A549 (cell line): ENCODE measurements at regions of chr1 and their contacts with region 1.

Region 1: GRCh38 chr1:47437447-47438164 is at the start of gene FOXD2:
- DNase-seq: peak; percentile 77 to 84
- ATAC-seq: peak; percentile 88 to 90
- H3K4me3 ChIP-seq: peak within 1 kb of the TSS; percentile 96
- H3K27ac ChIP-seq: peak within 1 kb of the TSS; percentile 95 to 99
- H3K4me1 ChIP-seq: peaks cover 7% of the 10 kb centered on the region; the same call in 1 of the 3 replicates
- CTCF ChIP-seq: peak; percentile 94
- EP300 ChIP-seq: no peak
- POLR2A ChIP-seq: peak; percentile 58
- RAD21 ChIP-seq: peak; percentile 26 to 83; a peak in 4 of 5 replicates
- polyA plus RNA-seq, gene FOXD2: 0.12 and 0.13 TPM in 2 replicates

Region 2: DNA sequence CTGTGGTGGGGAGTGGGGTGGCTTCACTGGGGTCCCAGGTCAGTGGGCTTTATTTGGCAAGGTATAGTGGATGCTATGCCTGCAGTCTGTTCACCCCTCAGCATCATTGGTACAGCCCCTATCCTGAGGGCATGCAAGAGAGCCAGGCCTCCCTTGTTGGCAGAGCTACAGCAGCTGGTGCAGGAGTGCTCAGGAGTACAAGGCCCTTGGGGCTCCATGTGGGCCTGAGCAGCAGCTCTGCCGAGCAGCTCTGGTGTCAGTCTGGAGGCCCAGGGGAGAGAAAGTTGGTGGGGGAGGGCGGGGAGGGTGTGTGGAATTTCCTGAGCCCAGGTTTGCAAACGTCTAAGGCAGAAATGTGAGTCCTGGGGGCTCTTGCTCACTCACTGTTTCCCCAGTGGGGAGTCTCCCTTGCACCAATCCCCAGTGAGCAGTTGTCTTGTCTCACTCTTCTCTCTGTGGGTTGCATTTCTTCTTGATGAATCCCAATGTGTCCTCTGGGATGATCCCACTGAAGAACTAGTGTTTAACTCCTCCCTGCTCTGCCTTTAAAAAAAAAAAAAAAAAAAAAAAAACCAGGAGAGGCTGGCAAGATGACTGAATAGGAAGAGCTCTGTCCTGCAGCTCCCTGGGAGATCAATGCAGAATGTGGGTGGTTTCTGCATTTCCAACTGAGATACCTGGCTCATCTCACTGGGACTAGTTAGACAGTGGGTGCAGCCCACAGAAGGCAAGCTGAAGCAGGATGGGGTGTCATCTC is 453.6 kb before region 1 on chr1:
- CTCF ChIA-PET with region 1: no interaction called
- POLR2A ChIA-PET with region 1: no interaction called
- DNase-seq: no peak
- ATAC-seq: no peak
- H3K4me3 ChIP-seq: no peak overlapping the region
- H3K27ac ChIP-seq: no peak overlapping the region
- H3K4me1 ChIP-seq: no peaks in the 10 kb centered on the region
- CTCF ChIP-seq: no peak
- EP300 ChIP-seq: no peak
- POLR2A ChIP-seq: no peak
- RAD21 ChIP-seq: no peak

Region 3: GRCh38 chr1:47179017-47179987 is 258.3 kb before region 1 on chr1:
- CTCF ChIA-PET with region 1: interaction called, 10 read pairs
- POLR2A ChIA-PET with region 1: interaction called, 3 read pairs
- DNase-seq: peak; percentile 73 to 92
- ATAC-seq: peak; percentile 70 to 84
- H3K4me3 ChIP-seq: peak overlapping the region; percentile 46
- H3K27ac ChIP-seq: peak overlapping the region; percentile 81 to 90
- H3K4me1 ChIP-seq: peaks cover 36% of the 10 kb centered on the region
- CTCF ChIP-seq: peak; percentile 78
- EP300 ChIP-seq: no peak
- POLR2A ChIP-seq: no peak; the same call in 1 of the 2 replicates
- RAD21 ChIP-seq: peak; percentile 88 to 89

Region 4: GRCh38 chr1:47424336-47424982 is 13.1 kb before region 1 on chr1:
- CTCF ChIA-PET with region 1: interaction called, 28 read pairs
- POLR2A ChIA-PET with region 1: no interaction called
- DNase-seq: peak; percentile 63 to 65
- ATAC-seq: peak; percentile 92 to 97
- H3K4me3 ChIP-seq: no peak overlapping the region
- H3K27ac ChIP-seq: no peak overlapping the region
- H3K4me1 ChIP-seq: no peaks in the 10 kb centered on the region
- CTCF ChIP-seq: peak; percentile 65
- EP300 ChIP-seq: no peak
- POLR2A ChIP-seq: no peak
- RAD21 ChIP-seq: peak; percentile 22 to 38; a peak in 3 of 5 replicates

Region 5: DNA sequence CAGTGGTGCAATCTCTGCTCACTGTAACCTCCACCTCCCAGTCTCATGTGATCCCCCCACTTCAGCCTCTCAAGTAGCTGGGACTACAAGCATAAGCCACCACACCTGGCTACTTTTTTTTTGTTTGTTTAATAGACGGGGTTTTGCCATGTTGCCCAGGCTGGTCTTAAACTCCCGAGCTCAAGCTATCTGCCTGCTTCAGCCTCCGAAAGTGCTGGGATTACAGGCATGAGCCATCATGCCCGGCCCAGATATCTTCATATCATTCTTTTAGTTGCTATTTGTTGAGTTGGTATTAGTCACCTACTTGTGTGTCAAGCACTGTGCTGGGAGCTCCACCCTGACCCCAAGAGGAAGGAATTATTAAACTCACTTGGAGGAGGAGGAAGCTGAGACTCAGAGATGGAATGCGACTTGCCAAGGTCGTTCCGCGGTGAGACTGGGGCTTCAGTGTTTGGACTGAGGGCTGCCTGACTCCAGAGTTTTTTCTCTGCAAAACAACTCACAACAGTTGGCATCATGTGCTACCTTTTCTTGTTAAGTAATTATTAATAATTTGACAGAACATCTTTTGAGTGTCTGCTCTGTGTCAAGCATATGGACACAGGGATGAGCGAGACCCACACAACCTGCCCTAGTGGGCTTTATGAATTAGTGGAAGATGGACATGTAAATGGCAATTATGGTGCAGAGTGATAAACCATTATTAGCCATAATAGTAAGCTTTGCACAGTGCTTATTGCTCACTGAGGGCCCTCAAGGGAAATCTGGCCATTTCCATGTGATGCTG is 132.3 kb after region 1 on chr1:
- CTCF ChIA-PET with region 1: interaction called, 21 read pairs
- POLR2A ChIA-PET with region 1: interaction called, 5 read pairs
- DNase-seq: peak; percentile 84 to 86
- ATAC-seq: peak; percentile 93 to 99
- H3K4me3 ChIP-seq: no peak overlapping the region
- H3K27ac ChIP-seq: peak overlapping the region; percentile 63 to 80
- H3K4me1 ChIP-seq: peaks cover 12% of the 10 kb centered on the region
- CTCF ChIP-seq: peak; percentile 48
- EP300 ChIP-seq: no peak
- POLR2A ChIP-seq: no peak
- RAD21 ChIP-seq: peak; percentile 50 to 51; a peak in 4 of 5 replicates

Region 6: GRCh38 chr1:47725992-47726855 is 288.6 kb after region 1 on chr1:
- CTCF ChIA-PET with region 1: interaction called, 313 read pairs
- POLR2A ChIA-PET with region 1: interaction called, 4 read pairs
- DNase-seq: peak; percentile 74 to 82
- ATAC-seq: peak; percentile 91 to 94
- H3K4me3 ChIP-seq: no peak overlapping the region
- H3K27ac ChIP-seq: no peak overlapping the region
- H3K4me1 ChIP-seq: peaks cover 22% of the 10 kb centered on the region; the same call in 2 of the 3 replicates
- CTCF ChIP-seq: peak; percentile 76
- EP300 ChIP-seq: no peak
- POLR2A ChIP-seq: no peak
- RAD21 ChIP-seq: peak; percentile 76 to 81